Cardiac septum (tissue), 1 donor: ENCODE measurements at regions of chr4 and their contacts with region 1.

Region 1: DNA sequence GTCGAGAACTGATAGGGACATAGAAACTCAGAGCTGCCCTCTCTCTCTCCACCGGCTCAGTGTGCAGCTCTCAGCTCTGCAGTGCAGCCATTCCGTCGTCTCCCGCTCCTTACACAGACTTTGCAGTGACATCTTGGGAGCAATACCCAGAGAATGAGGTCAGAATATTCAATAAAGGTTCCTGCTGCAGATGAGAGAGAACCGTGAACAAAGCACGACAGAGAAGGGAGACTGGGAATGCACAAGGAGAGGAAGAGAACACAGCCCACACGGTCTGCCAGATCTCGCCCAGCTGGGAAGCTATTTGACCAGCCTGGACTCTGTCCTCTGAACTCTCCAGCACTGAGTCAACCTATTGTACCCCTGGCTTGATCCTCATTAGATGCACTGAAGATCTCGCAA is 118.0 kb upstream of the PPARGC1A start:
- DNase-seq: no peak

Region 2: GRCh38 chr4:23991444-23991843 is 16.4 kb before region 1 on chr4:
- intact Hi-C with region 1: loop called (anchors 1 kb)
- DNase-seq: no peak

Region 3: DNA sequence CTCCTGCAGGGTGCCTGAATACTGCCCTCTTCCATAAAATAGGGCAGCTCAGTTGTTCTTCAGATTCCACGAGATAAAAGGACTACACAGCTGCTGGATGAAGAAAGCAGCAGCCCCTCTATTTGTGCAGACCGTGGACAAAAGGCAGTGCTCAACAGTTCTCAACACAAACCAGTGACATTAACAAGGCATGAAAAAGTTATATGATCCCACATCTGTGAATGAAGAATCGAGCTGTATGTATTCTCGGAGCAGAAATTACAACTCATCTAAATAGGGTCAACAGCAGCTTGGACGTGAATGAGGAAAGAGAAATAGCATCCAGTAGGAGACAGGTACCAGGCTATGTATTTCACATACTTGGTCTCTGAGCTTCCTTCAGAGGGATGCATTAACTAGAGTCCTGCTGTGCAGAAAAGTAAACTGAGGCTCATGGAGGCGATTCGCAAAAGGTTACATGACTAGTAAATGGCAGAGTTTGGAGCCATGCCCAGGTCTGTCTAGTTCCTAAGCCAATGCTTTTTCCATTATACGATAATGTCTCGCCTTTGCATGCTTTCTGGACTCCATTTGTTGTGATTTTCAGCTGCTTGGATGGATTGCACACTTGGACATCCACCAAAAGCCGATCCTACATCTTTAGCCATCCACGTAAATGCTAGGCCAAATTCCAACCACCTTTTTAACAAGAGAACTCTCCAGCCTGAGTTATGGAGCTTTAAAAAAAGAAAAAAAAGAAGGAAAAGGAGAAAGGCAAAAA is 183.3 kb after region 1 on chr4:
- intact Hi-C with region 1: no loop called
- DNase-seq: no peak